ENCODE measurements at regions of chr2 and their contacts with region 1.

Region 1: DNA sequence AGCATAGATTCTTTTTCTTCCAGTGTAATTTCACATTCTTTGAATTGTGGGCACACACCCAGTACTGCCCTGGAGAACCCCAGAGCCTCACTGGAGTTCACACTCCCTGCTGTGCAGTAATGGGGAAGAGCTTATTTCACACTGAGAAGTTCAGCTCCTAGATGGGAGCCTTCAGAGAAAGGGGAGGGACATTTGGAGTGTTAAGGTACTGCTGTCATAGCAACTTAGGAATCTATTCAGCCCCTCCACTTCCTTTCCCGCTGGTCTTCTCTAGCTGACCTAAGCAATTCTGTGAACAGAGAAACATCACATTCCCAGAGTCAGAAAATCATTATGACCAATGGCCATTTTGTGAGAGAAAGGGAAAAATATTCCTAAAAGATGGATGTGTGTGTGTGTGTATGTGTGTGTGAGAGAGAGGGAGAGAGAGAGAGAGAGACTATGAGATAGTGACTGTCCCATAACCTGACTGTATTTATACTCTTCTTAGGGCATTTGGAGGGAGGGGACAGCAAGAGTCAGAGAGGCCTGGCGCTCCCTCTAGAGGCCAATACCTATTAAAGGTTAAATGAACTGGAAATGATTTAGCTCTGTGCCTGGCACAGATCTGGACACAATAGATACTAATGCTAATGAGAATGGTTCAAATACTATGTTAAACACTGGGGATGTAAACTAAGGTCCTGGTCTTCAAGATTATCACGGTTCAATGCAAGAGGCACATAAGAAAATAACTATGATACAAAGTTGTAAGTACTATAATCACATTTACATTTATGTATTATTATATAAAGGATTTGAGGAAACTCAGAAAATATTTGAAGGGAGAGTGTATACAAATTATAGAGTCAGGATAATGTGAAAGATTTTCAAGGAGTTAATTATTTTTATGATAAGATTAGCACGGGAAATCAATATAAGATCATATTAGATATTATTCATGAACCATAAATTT is 41.5 kb upstream of the RPE start:
- DNase-seq: peak; percentile 65
- H3K4me3 ChIP-seq: no peak overlapping the region
- H3K27ac ChIP-seq: no peak overlapping the region
- H3K4me1 ChIP-seq: no peaks in the 10 kb centered on the region
- H3K27me3 ChIP-seq: peaks cover 2 to 8% of the 10 kb centered on the region in 2 experiments
- CTCF ChIP-seq: peak; percentile 57 to 64
- POLR2A ChIP-seq: no peak

Region 2: GRCh38 chr2:208392300-208393080 is 1568.5 kb before region 1 on chr2:
- CTCF ChIA-PET with region 1: interaction called, 15 read pairs
- POLR2A ChIA-PET with region 1: no interaction called
- dilution Hi-C with region 1: no loop called
- intact Hi-C with region 1: loop called (anchors 10 kb)
- DNase-seq: no peak
- H3K4me3 ChIP-seq: no peak overlapping the region
- H3K27ac ChIP-seq: no peak overlapping the region
- H3K4me1 ChIP-seq: no peaks in the 10 kb centered on the region
- H3K27me3 ChIP-seq: no peaks in the 10 kb centered on the region
- CTCF ChIP-seq: peak in 1 of 2 donors; percentile 4
- POLR2A ChIP-seq: no peak

Region 3: DNA sequence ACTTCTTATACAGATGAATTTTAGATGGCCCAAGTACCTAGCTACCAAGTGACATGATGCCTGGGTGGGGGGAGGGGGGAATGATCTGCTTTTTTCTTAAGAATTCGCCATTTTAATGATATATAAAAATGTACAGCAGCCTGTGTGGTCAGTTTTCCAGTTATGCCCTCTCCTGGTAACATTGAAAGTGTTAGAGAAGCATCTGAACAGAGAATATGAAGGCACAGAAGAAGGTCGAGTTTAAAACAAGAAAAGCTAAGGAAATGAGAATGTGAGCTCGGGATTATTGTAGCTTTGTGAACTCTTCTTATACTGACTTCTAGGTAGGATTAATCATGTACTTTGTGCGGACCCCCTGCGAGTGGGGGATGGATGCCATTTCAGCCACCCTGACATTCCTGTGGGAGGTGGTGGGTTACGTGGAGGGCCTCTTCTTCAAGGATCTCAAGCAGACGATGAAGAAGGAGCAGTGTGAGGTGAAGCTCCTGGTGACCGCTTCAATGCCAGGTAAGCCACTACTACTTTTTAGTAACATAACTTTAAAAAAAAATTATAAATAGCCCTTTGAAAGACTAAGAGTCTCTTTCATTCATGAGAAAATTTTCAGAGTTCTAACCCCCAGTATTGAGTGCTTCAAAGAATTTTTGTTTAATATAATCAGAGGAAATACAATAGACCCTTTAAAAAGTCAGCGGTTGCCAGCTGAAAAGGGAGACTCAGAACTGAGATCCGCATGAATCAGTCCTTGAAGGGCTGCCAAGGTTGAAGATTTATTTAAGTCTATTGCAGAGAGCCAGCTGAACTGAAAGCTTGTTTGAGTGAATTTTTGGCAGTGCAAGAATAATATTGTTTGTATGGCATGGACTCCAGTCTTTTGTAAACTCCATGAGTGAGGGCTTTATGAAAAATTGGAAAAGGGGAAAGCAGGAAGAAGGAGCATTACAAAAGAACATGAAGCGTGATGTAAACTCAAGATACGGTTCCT is 27.2 kb before region 1 on chr2:
- CTCF ChIA-PET with region 1: interaction called, 29 read pairs
- POLR2A ChIA-PET with region 1: no interaction called
- dilution Hi-C with region 1: no loop called
- intact Hi-C with region 1: loop called (anchors 1 kb)
- DNase-seq: peak; percentile 73
- H3K4me3 ChIP-seq: no peak overlapping the region
- H3K27ac ChIP-seq: no peak overlapping the region
- H3K4me1 ChIP-seq: no peaks in the 10 kb centered on the region
- H3K27me3 ChIP-seq: no peaks in the 10 kb centered on the region
- CTCF ChIP-seq: no peak
- POLR2A ChIP-seq: no peak

Region 4: GRCh38 chr2:209942936-209943605 is 17.9 kb before region 1 on chr2:
- CTCF ChIA-PET with region 1: interaction called, 18 read pairs
- POLR2A ChIA-PET with region 1: no interaction called
- dilution Hi-C with region 1: no loop called
- intact Hi-C with region 1: no loop called
- DNase-seq: no peak
- H3K4me3 ChIP-seq: no peak overlapping the region
- H3K27ac ChIP-seq: no peak overlapping the region
- H3K4me1 ChIP-seq: peaks cover 3% of the 10 kb centered on the region
- H3K27me3 ChIP-seq: no peaks in the 10 kb centered on the region
- CTCF ChIP-seq: no peak
- POLR2A ChIP-seq: no peak

Region 5: DNA sequence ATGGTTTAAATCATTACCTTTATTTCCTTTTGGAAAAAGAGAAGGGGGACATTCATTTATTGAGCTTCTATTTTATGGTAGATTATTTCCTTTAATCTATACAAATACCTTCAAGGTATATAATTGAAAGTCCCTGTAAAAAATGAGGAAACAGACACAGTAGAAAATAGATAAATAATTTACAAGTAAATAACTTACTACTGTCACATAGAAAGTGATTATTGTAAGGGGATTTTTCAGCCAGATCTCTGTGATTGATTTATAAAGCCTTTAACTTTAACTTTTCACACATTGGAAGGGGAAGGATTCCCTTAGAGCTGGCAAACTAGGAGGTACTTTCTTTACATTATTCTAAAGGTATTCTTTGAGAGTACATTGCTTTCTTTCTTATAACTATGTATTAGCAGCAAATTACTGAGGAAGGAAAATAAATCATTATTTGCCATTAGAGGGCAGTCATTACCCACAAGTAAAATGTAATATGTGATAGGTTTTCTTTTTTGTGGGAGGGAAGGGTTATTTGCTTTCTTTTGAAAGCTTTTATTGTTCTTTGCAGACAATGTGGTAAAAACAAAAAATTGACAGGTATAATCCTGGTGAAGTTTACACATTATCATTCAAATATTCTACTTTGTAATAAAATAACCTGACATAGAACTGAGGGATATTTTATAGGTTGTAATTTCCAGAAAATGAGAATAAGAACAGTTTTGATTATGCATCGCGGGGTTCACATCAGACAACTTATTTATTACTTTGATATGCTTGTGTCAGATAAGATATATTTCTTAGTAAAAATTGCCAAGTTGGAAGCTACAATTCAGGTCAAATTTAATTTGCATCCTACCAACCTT is 16.7 kb after region 1 on chr2:
- CTCF ChIA-PET with region 1: interaction called, 22 read pairs
- POLR2A ChIA-PET with region 1: no interaction called
- dilution Hi-C with region 1: no loop called
- intact Hi-C with region 1: no loop called
- DNase-seq: peak; percentile 60
- H3K4me3 ChIP-seq: no peak overlapping the region
- H3K27ac ChIP-seq: no peak overlapping the region
- H3K4me1 ChIP-seq: no peaks in the 10 kb centered on the region
- H3K27me3 ChIP-seq: peaks cover 2 to 6% of the 10 kb centered on the region in 2 experiments
- CTCF ChIP-seq: peak in 1 of 2 donors; percentile 9
- POLR2A ChIP-seq: no peak